SK-N-SH (cell line): ENCODE measurements at regions of chr22 and their contacts with region 1.

Region 1: DNA sequence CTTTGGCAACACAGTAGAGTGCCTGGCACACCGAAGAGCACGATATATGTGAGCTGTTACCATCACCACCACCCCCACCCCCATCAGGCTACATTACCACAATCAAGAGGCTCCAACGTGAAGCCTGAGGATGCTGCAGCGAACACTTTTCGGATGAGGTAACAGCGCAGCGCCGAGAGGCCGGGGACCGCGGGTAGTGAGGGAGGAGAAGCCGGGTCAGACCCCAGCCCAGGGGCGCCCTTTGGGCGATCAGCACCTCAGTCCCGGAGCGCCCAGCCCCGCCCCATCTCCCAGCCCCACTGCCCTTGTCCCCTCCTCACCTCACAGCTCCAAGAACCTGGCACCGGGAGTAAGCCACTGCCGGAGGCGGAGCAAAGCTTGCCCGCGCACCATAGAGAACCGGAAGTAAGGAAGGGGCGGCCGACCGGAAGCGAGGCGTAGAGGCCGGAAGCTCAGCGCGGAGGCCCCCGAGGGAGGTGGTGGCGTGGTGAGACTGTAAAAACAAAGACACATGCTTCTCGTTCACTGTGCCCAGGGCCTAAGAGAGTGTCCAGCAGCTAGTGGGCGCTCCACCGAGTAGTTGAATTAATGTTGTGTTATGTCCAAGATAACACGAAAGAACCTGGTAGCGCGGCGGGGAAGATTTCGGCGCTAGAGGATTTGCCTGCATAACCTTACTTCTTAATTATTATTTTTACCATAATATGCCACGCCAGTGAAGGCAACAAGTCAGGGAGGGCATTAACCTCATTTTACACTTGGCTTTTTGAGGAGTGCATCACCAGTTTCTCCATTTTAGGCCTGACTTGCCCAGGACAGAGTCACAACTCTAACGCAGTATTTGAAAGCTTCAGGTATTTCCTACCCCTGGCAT is at the start of gene THOC5:
- DNase-seq: peak; percentile 96
- H3K4me3 ChIP-seq: peak within 1 kb of the TSS; percentile 77 to 88
- H3K27ac ChIP-seq: peak within 1 kb of the TSS; percentile 79 to 92
- H3K4me1 ChIP-seq: peaks cover 6 to 12% of the 10 kb centered on the region in 2 experiments; a peak in 3 of 4 replicates
- H3K27me3 ChIP-seq: no peaks in the 10 kb centered on the region
- CTCF ChIP-seq: peak; percentile 73
- EP300 ChIP-seq: peak in 1 of 2 experiments; percentile 23; a peak in 2 of 4 replicates
- RAD21 ChIP-seq: peak; percentile 20; the same call in 1 of the 2 replicates
- polyA plus RNA-seq, gene THOC5: 95.9 and 141 TPM in 2 replicates

Region 2: GRCh38 chr22:29480512-29481264 is 72.9 kb before region 1 on chr22:
- CTCF ChIA-PET with region 1: interaction called, 7 read pairs
- POLR2A ChIA-PET with region 1: interaction called, 13 read pairs
- DNase-seq: peak; percentile 96
- H3K4me3 ChIP-seq: peak overlapping the region; percentile 41 to 47; a peak in 3 of 4 replicates
- H3K27ac ChIP-seq: peak overlapping the region in 1 of 2 experiments; percentile 23; a peak in 1 of 4 replicates
- H3K4me1 ChIP-seq: peaks cover 0 to 32% of the 10 kb centered on the region in 2 experiments; a peak in 1 of 4 replicates
- H3K27me3 ChIP-seq: peaks cover 9% of the 10 kb centered on the region; the same call in 1 of the 2 replicates
- CTCF ChIP-seq: no peak; the same call in 1 of the 2 replicates
- EP300 ChIP-seq: no peak; a peak in 1 of 4 replicates
- RAD21 ChIP-seq: peak; percentile 48

Region 3: DNA sequence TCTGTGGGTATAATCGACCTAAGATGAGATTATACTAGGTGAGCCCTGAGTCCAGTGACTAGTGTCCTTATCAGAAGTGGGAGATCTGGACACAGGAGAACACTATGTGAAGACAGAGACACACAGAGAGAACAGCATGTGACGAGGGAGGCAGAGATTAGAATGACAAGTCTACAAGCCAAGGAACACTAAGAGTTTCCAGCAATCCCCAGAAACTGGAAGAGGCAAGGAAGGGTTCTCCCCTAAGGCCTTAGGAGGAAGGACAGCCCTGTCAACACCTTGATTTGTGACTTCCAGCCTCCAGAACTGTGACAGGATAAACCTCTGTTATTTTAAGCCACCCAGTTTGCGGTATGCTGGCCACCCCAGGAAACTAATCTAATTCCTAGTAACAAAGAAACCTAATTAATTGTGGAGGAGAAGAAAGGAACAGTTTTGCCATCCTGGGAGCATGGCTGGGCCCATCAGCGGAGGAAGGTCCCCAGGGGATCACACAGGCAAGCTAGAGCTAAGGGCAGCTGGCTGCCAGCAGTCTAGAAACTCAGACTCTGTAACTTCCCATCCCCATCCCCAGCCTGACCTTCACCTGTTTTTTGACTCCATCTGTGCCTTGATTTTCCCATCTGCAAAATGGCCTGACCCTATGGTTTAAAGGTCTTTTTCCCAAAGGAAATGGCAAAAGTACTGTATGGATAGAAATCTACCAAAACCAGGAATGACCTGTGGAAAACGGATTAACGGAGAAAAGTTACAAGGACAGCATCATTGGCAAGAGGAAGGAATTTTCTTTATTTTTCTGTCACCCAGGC is 10.3 kb after region 1 on chr22:
- CTCF ChIA-PET with region 1: interaction called, 13 read pairs
- POLR2A ChIA-PET with region 1: interaction called, 18 read pairs
- DNase-seq: no peak
- H3K4me3 ChIP-seq: no peak overlapping the region
- H3K27ac ChIP-seq: no peak overlapping the region
- H3K4me1 ChIP-seq: no peaks in the 10 kb centered on the region
- H3K27me3 ChIP-seq: no peaks in the 10 kb centered on the region
- CTCF ChIP-seq: no peak
- EP300 ChIP-seq: no peak
- RAD21 ChIP-seq: no peak

Region 4: DNA sequence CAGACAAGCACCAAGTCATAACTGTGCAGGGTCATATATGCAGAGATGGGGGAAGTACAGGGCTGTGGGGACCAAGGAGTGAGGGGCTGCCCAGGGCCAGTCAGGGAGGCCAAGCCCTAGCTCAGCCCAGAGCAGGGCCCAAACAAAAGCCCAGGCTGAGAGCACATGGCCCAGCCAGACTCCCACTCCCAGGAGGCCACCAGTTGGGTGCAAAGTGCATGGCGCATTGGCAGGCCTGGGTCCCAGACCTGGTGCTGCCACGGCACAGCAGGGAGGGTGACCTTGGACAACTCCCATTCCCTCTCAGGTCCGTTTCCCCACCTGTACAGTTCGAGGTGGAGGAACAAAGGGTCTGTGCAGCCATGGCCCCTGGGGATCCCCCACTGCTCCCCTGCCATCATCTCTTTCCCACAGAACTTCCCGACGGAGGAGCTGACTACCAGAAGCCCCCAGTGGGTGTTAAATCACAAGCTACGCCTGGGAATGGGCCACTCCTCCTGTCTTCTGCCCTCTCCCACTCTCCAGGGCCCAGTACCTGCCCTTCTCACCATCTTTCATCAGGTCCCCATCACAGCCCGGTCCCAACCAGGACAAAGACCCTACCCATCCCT is 26.7 kb after region 1 on chr22:
- CTCF ChIA-PET with region 1: interaction called, 7 read pairs
- POLR2A ChIA-PET with region 1: interaction called, 16 read pairs
- DNase-seq: peak; percentile 62
- H3K4me3 ChIP-seq: peak overlapping the region; percentile 65 to 95
- H3K27ac ChIP-seq: peak overlapping the region; percentile 28 to 79; a peak in 3 of 4 replicates
- H3K4me1 ChIP-seq: peaks cover 0 to 7% of the 10 kb centered on the region in 2 experiments; a peak in 1 of 4 replicates
- H3K27me3 ChIP-seq: no peaks in the 10 kb centered on the region
- CTCF ChIP-seq: no peak
- EP300 ChIP-seq: no peak
- RAD21 ChIP-seq: no peak